CD8-positive, alpha-beta T cell (primary cell): ENCODE measurements at regions of chrX and their contacts with region 1.

Region 1: GRCh38 chrX:39730662-39731397 is 366.9 kb downstream of the BCOR start:
- DNase-seq: peak in 8 of 9 experiments; percentile 32 to 71 (median 52)
- ATAC-seq: peak; percentile 74
- H3K4me3 ChIP-seq: no peak overlapping the region
- H3K4me3 Mint-ChIP-seq: peak overlapping the region; percentile 29
- H3K27ac ChIP-seq: no peak overlapping the region
- H3K27ac Mint-ChIP-seq: no peak overlapping the region
- H3K4me1 ChIP-seq: no peaks in the 10 kb centered on the region
- H3K4me1 Mint-ChIP-seq: peaks cover 5% of the 10 kb centered on the region
- H3K27me3 ChIP-seq: no peaks in the 10 kb centered on the region
- H3K27me3 Mint-ChIP-seq: no peaks in the 10 kb centered on the region
- CTCF ChIP-seq: peak; percentile 52

Region 2: DNA sequence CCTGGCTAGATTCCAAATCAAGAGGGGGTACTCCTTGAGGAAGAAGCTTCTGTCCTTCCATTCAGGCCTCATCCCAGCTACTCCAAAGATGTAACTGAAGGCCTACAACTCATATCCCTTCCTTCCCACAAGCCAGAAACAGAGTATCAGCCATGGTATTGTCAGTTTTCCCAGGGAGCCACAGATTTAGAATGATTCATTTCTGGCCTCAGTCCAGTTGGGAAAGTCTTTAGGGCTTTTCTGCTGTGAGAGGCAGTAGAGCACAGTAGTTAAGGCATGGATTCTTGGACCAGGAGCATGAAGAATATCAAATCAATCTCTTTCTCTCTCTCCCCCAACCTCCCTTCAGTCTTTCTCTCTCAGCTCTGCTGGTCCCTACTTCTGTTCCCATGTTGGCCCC is 138.1 kb before region 1 on chrX:
- CTCF ChIA-PET with region 1: no interaction called
- POLR2A ChIA-PET with region 1: no interaction called
- intact Hi-C with region 1: no loop called
- DNase-seq: no peak
- ATAC-seq: no peak
- H3K4me3 ChIP-seq: no peak overlapping the region
- H3K4me3 Mint-ChIP-seq: no peak overlapping the region
- H3K27ac ChIP-seq: no peak overlapping the region
- H3K27ac Mint-ChIP-seq: no peak overlapping the region
- H3K4me1 ChIP-seq: no peaks in the 10 kb centered on the region
- H3K4me1 Mint-ChIP-seq: no peaks in the 10 kb centered on the region
- H3K27me3 ChIP-seq: no peaks in the 10 kb centered on the region
- H3K27me3 Mint-ChIP-seq: no peaks in the 10 kb centered on the region
- CTCF ChIP-seq: no peak

Region 3: GRCh38 chrX:39705299-39705698 is 25.5 kb before region 1 on chrX:
- CTCF ChIA-PET with region 1: no interaction called
- POLR2A ChIA-PET with region 1: no interaction called
- intact Hi-C with region 1: no loop called
- DNase-seq: no peak
- ATAC-seq: no peak
- H3K4me3 ChIP-seq: no peak overlapping the region
- H3K4me3 Mint-ChIP-seq: no peak overlapping the region
- H3K27ac ChIP-seq: no peak overlapping the region
- H3K27ac Mint-ChIP-seq: no peak overlapping the region
- H3K4me1 ChIP-seq: no peaks in the 10 kb centered on the region
- H3K4me1 Mint-ChIP-seq: no peaks in the 10 kb centered on the region
- H3K27me3 ChIP-seq: no peaks in the 10 kb centered on the region
- H3K27me3 Mint-ChIP-seq: no peaks in the 10 kb centered on the region
- CTCF ChIP-seq: no peak

Region 4: DNA sequence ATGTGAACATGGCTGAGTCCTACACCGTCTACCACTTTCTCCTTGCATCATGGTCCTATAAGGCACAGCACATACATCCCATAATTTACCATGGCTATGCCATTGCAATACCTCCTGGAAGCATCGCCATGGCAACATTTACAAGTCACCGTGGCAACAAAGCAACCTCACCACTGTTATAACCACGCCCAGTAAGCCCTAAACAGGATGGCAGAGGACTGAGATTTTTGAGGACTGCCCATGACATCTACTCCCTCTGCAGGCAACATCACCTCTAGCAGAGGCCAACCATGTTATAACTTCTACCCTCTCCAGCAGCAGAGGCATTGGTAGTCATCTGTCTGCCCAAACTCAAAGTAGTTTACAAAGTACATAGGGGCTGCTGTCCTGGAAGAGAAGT is 337.2 kb after region 1 on chrX:
- CTCF ChIA-PET with region 1: no interaction called
- POLR2A ChIA-PET with region 1: no interaction called
- intact Hi-C with region 1: loop called (anchors 5 to 10 kb)
- DNase-seq: peak in 3 of 9 experiments; percentile 30 to 59 (median 40)
- ATAC-seq: peak; percentile 63
- H3K4me3 ChIP-seq: no peak overlapping the region
- H3K4me3 Mint-ChIP-seq: no peak overlapping the region
- H3K27ac ChIP-seq: no peak overlapping the region
- H3K27ac Mint-ChIP-seq: no peak overlapping the region
- H3K4me1 ChIP-seq: peaks cover 36% of the 10 kb centered on the region
- H3K4me1 Mint-ChIP-seq: peaks cover 55% of the 10 kb centered on the region
- H3K27me3 ChIP-seq: no peaks in the 10 kb centered on the region
- H3K27me3 Mint-ChIP-seq: no peaks in the 10 kb centered on the region
- CTCF ChIP-seq: no peak

Region 5: GRCh38 chrX:40266490-40267333 is 535.9 kb after region 1 on chrX:
- CTCF ChIA-PET with region 1: interaction called, 14 read pairs
- POLR2A ChIA-PET with region 1: no interaction called
- intact Hi-C with region 1: loop called (anchors 1 to 5 kb)
- DNase-seq: peak; percentile 10 to 72 (median 46)
- ATAC-seq: peak; percentile 89
- H3K4me3 ChIP-seq: peak overlapping the region; percentile 57 to 65
- H3K4me3 Mint-ChIP-seq: peak overlapping the region; percentile 79
- H3K27ac ChIP-seq: no peak overlapping the region
- H3K27ac Mint-ChIP-seq: no peak overlapping the region
- H3K4me1 ChIP-seq: peaks cover 11% of the 10 kb centered on the region
- H3K4me1 Mint-ChIP-seq: peaks cover 6% of the 10 kb centered on the region
- H3K27me3 ChIP-seq: no peaks in the 10 kb centered on the region
- H3K27me3 Mint-ChIP-seq: no peaks in the 10 kb centered on the region
- CTCF ChIP-seq: peak; percentile 41

Region 6: GRCh38 chrX:40468033-40468846 is 737.4 kb after region 1 on chrX:
- CTCF ChIA-PET with region 1: interaction called, 3 read pairs
- POLR2A ChIA-PET with region 1: no interaction called
- intact Hi-C with region 1: loop called in 1 of 2 experiments (anchors 2 kb)
- DNase-seq: peak in 7 of 9 experiments; percentile 1 to 57 (median 16)
- ATAC-seq: no peak
- H3K4me3 ChIP-seq: no peak overlapping the region
- H3K4me3 Mint-ChIP-seq: no peak overlapping the region
- H3K27ac ChIP-seq: no peak overlapping the region
- H3K27ac Mint-ChIP-seq: no peak overlapping the region
- H3K4me1 ChIP-seq: peaks cover 16% of the 10 kb centered on the region
- H3K4me1 Mint-ChIP-seq: peaks cover 36% of the 10 kb centered on the region
- H3K27me3 ChIP-seq: no peaks in the 10 kb centered on the region
- H3K27me3 Mint-ChIP-seq: peaks cover 2% of the 10 kb centered on the region
- CTCF ChIP-seq: no peak